K562 (cell line): ENCODE measurements at regions of chr7 and their contacts with region 1.

Region 1: DNA sequence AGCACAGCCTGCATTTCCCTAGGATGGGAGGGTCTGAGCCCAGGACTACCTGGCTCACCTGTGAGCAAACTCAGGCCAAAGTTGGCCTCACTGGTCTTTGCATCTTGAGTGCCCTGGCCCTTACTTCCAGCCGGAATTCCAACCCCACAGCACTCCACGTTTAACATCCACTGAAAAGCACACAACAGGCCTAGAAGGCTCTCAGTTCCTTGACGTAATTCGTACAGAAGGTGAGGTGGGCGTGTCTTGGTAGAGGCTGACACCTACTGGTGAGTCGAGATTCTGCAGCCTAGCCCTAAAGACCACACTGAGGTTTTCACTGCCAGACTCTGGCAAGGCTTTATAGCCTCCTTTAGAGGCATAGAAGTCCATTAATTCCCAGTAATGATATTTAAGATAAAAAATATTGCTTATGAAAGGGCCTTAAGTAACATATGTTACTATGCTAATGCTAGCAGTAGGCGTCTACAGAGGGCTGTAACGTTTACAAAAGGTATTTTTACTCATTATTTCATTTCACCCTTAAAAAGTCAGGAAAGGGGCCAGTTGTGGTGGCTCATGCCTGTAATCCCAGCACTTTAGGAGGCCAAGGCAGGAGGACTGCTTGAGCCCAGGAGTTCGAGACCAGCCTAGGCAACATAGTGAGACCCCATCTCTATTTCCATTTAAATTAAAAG is 95.8 kb downstream of the HIP1 start:
- DNase-seq: peak; percentile 81 to 88 (median 85)
- ATAC-seq: peak; percentile 87
- H3K4me3 ChIP-seq: no peak overlapping the region
- H3K27ac ChIP-seq: no peak overlapping the region
- H3K4me1 ChIP-seq: peaks cover 12 to 14% of the 10 kb centered on the region in 2 experiments
- H3K27me3 ChIP-seq: no peaks in the 10 kb centered on the region
- CTCF ChIP-seq: peak; percentile 87 to 96 (median 95)
- EP300 ChIP-seq: no peak
- POLR2A ChIP-seq: no peak
- RAD21 ChIP-seq: peak; percentile 92 to 97

Region 2: GRCh38 chr7:75534727-75535307 is 108.1 kb before region 1 on chr7:
- CTCF ChIA-PET with region 1: no interaction called
- POLR2A ChIA-PET with region 1: no interaction called
- in situ Hi-C with region 1: no loop called
- intact Hi-C with region 1: loop called (anchors 5 kb)
- DNase-seq: peak in 3 of 4 experiments; percentile 8 to 45 (median 36)
- ATAC-seq: peak; percentile 58
- H3K4me3 ChIP-seq: no peak overlapping the region
- H3K27ac ChIP-seq: peak overlapping the region; percentile 9; the same call in 1 of the 3 replicates
- H3K4me1 ChIP-seq: peaks cover 8 to 13% of the 10 kb centered on the region in 2 experiments
- H3K27me3 ChIP-seq: no peaks in the 10 kb centered on the region
- CTCF ChIP-seq: no peak
- EP300 ChIP-seq: peak; percentile 54; the same call in 1 of the 2 replicates
- POLR2A ChIP-seq: no peak
- RAD21 ChIP-seq: no peak; a peak in 1 of 4 replicates

Region 3: DNA sequence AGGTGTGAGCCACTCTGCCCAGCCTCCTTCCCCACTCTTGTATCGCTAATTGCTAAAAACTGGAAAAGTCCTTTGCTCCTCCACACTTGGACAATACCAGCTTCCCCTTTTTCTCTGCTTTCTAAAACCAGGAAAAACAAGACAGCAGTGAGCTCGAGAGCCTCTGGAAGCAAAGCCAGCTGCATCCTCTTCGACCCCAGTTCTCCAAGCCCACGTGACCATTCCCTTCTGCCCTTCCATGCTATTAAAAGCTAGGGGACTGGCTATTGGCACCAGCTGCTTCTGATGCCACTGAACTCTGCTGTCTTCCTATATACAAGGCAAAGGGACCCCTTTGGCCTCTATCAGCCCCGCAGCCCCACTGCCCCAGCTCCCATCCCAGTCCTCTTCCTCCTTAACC is 58.6 kb before region 1 on chr7:
- CTCF ChIA-PET with region 1: no interaction called
- POLR2A ChIA-PET with region 1: no interaction called
- in situ Hi-C with region 1: no loop called
- intact Hi-C with region 1: loop called (anchors 5 kb)
- DNase-seq: no peak
- ATAC-seq: no peak
- H3K4me3 ChIP-seq: no peak overlapping the region
- H3K27ac ChIP-seq: no peak overlapping the region
- H3K4me1 ChIP-seq: peaks cover 0 to 3% of the 10 kb centered on the region in 2 experiments; a peak in 1 of 5 replicates
- H3K27me3 ChIP-seq: no peaks in the 10 kb centered on the region
- CTCF ChIP-seq: no peak
- EP300 ChIP-seq: no peak
- POLR2A ChIP-seq: no peak
- RAD21 ChIP-seq: no peak

Region 4: GRCh38 chr7:75694638-75695399 is 51.9 kb after region 1 on chr7:
- CTCF ChIA-PET with region 1: no interaction called
- POLR2A ChIA-PET with region 1: no interaction called
- in situ Hi-C with region 1: no loop called
- intact Hi-C with region 1: no loop called
- DNase-seq: peak in 2 of 4 experiments; percentile 41 to 71
- ATAC-seq: peak; percentile 65
- H3K4me3 ChIP-seq: no peak overlapping the region
- H3K27ac ChIP-seq: no peak overlapping the region; the same call in 1 of the 3 replicates
- H3K4me1 ChIP-seq: peaks cover 5 to 9% of the 10 kb centered on the region in 2 experiments; a peak in 4 of 5 replicates
- H3K27me3 ChIP-seq: no peaks in the 10 kb centered on the region
- CTCF ChIP-seq: no peak
- EP300 ChIP-seq: peak; percentile 55
- POLR2A ChIP-seq: no peak
- RAD21 ChIP-seq: no peak

Region 5: GRCh38 chr7:75711656-75712514 is 68.9 kb after region 1 on chr7:
- CTCF ChIA-PET with region 1: no interaction called
- POLR2A ChIA-PET with region 1: no interaction called
- in situ Hi-C with region 1: no loop called
- intact Hi-C with region 1: no loop called
- DNase-seq: peak in 1 of 4 experiments; percentile 7
- ATAC-seq: no peak
- H3K4me3 ChIP-seq: no peak overlapping the region
- H3K27ac ChIP-seq: no peak overlapping the region
- H3K4me1 ChIP-seq: no peaks in the 10 kb centered on the region; a peak in 2 of 5 replicates
- H3K27me3 ChIP-seq: no peaks in the 10 kb centered on the region
- CTCF ChIP-seq: no peak
- EP300 ChIP-seq: no peak
- POLR2A ChIP-seq: no peak
- RAD21 ChIP-seq: no peak

Region 6: GRCh38 chr7:75762314-75762917 is 119.5 kb after region 1 on chr7:
- CTCF ChIA-PET with region 1: interaction called, 4 read pairs
- POLR2A ChIA-PET with region 1: no interaction called
- in situ Hi-C with region 1: no loop called
- intact Hi-C with region 1: loop called (anchors 2 kb)
- DNase-seq: peak; percentile 65 to 82 (median 68)
- ATAC-seq: peak; percentile 94
- H3K4me3 ChIP-seq: no peak overlapping the region
- H3K27ac ChIP-seq: no peak overlapping the region
- H3K4me1 ChIP-seq: peaks cover 0 to 6% of the 10 kb centered on the region in 2 experiments; a peak in 3 of 5 replicates
- H3K27me3 ChIP-seq: no peaks in the 10 kb centered on the region
- CTCF ChIP-seq: peak; percentile 72 to 90 (median 86)
- EP300 ChIP-seq: no peak
- POLR2A ChIP-seq: no peak
- RAD21 ChIP-seq: peak; percentile 96 to 98